Heart right ventricle (tissue), 16 donors: ENCODE measurements at regions of chr10 and their contacts with region 1.

Region 1: GRCh38 chr10:9656996-9657395 is 1360.7 kb upstream of the CELF2 start:
- DNase-seq: no peak
- ATAC-seq: no peak
- H3K4me3 ChIP-seq: no peak overlapping the region
- H3K27ac ChIP-seq: no peak overlapping the region
- H3K4me1 ChIP-seq: no peaks in the 10 kb centered on the region
- H3K27me3 ChIP-seq: no peaks in the 10 kb centered on the region
- CTCF ChIP-seq: no peak

Region 2: GRCh38 chr10:9253108-9253507 is 403.9 kb before region 1 on chr10:
- intact Hi-C with region 1: no loop called
- DNase-seq: no peak
- ATAC-seq: no peak
- H3K4me3 ChIP-seq: no peak overlapping the region
- H3K27ac ChIP-seq: no peak overlapping the region
- H3K4me1 ChIP-seq: no peaks in the 10 kb centered on the region
- H3K27me3 ChIP-seq: peaks cover 0 to 4% (median 0%) of the 10 kb centered on the region in 7 donors
- CTCF ChIP-seq: no peak

Region 3: GRCh38 chr10:9508606-9509005 is 148.4 kb before region 1 on chr10:
- intact Hi-C with region 1: no loop called
- DNase-seq: no peak
- ATAC-seq: no peak
- H3K4me3 ChIP-seq: no peak overlapping the region
- H3K27ac ChIP-seq: no peak overlapping the region
- H3K4me1 ChIP-seq: no peaks in the 10 kb centered on the region
- H3K27me3 ChIP-seq: no peaks in the 10 kb centered on the region
- CTCF ChIP-seq: no peak

Region 4: GRCh38 chr10:9759596-9759995 is 102.6 kb after region 1 on chr10:
- intact Hi-C with region 1: loop called in 1 of 10 experiments (anchors 10 kb)
- DNase-seq: no peak
- ATAC-seq: no peak
- H3K4me3 ChIP-seq: no peak overlapping the region
- H3K27ac ChIP-seq: no peak overlapping the region
- H3K4me1 ChIP-seq: no peaks in the 10 kb centered on the region
- H3K27me3 ChIP-seq: no peaks in the 10 kb centered on the region
- CTCF ChIP-seq: no peak